Lower lobe of right lung (tissue), 2 donors: ENCODE measurements at regions of chr11 and their contacts with region 1.

Region 1: GRCh38 chr11:134139873-134140331 is 71.0 kb downstream of the JAM3 start:
- DNase-seq: no peak
- ATAC-seq: peak; percentile 72 to 83
- H3K4me3 ChIP-seq: no peak overlapping the region
- H3K27ac ChIP-seq: no peak overlapping the region
- H3K4me1 ChIP-seq: no peaks in the 10 kb centered on the region
- H3K27me3 ChIP-seq: no peaks in the 10 kb centered on the region
- CTCF ChIP-seq: peak; percentile 86

Region 2: GRCh38 chr11:134050541-134051383 is 89.1 kb before region 1 on chr11:
- intact Hi-C with region 1: loop called (anchors 10 kb)
- DNase-seq: peak; percentile 84
- ATAC-seq: peak; percentile 93 to 95
- H3K4me3 ChIP-seq: peak overlapping the region; percentile 48
- H3K27ac ChIP-seq: peak overlapping the region; percentile 72
- H3K4me1 ChIP-seq: peaks cover 2% of the 10 kb centered on the region
- H3K27me3 ChIP-seq: peaks cover 10% of the 10 kb centered on the region
- CTCF ChIP-seq: peak; percentile 91

Region 3: GRCh38 chr11:134261626-134262488 is 122.0 kb after region 1 on chr11:
- intact Hi-C with region 1: no loop called
- DNase-seq: no peak
- ATAC-seq: peak in 1 of 2 donors; percentile 5
- H3K4me3 ChIP-seq: no peak overlapping the region
- H3K27ac ChIP-seq: no peak overlapping the region
- H3K4me1 ChIP-seq: peaks cover 16% of the 10 kb centered on the region
- H3K27me3 ChIP-seq: no peaks in the 10 kb centered on the region
- CTCF ChIP-seq: peak; percentile 50